ENCODE measurements at regions of chr20 and their contacts with region 1.

Region 1: GRCh38 chr20:24176661-24177060 is 188.1 kb upstream of the GGTLC1 start:
- DNase-seq: no peak
- ATAC-seq: no peak

Region 2: DNA sequence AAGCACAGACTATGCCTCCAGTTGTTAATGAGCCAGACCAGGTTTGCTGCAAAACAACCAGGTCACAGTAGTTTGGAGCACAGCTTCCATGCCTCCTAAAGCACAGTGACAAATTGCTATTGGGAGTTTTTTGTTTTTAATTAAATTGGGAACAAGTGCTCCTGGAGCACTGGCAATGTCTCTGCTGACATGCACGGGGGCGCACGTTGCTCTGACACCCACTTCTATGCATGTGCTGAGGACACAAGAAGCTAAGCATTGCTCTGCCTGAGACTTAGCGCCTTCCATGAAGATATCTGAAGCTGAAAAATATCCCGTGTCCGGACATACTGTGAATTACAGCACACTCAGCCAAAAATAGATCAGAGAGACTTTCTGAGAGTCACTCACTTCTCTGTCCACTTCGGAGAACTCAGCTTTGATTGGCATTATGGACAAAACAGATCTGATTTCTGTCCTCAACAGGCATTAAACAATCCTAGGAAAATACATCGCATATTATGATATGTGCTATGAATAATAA is 169.5 kb before region 1 on chr20:
- intact Hi-C with region 1: no loop called
- DNase-seq: no peak
- ATAC-seq: peak; percentile 56

Region 3: GRCh38 chr20:24379484-24379927 is 202.8 kb after region 1 on chr20:
- intact Hi-C with region 1: loop called (anchors 10 kb)
- DNase-seq: peak; percentile 59
- ATAC-seq: peak; percentile 60

Measured in left ventricle myocardium superior (tissue), 1 donor.